H1 (cell line): ENCODE measurements at regions of chr12 and their contacts with region 1.

Region 1: GRCh38 chr12:124592472-124593160 is 25.2 kb upstream of the NCOR2 start:
- DNase-seq: no peak
- H3K4me3 ChIP-seq: no peak overlapping the region
- H3K27ac ChIP-seq: no peak overlapping the region
- H3K4me1 ChIP-seq: peaks cover 0 to 3% (median 0%) of the 10 kb centered on the region in 4 experiments; a peak in 2 of 7 replicates
- H3K27me3 ChIP-seq: 0 out of 7 replicates have a peak, but pooled peaks cover 0 to 2% (median 0%) of the 10 kb centered on the region in 4 experiments
- CTCF ChIP-seq: no peak
- EP300 ChIP-seq: no peak
- POLR2A ChIP-seq: no peak
- RAD21 ChIP-seq: no peak

Region 2: GRCh38 chr12:124559182-124560005 is 33.2 kb before region 1 on chr12:
- CTCF ChIA-PET with region 1: no interaction called
- POLR2A ChIA-PET with region 1: no interaction called
- DNase-seq: no peak
- H3K4me3 ChIP-seq: no peak overlapping the region
- H3K27ac ChIP-seq: no peak overlapping the region
- H3K4me1 ChIP-seq: peaks cover 21 to 57% (median 39%) of the 10 kb centered on the region in 4 experiments
- H3K27me3 ChIP-seq: no peaks in the 10 kb centered on the region
- CTCF ChIP-seq: no peak
- EP300 ChIP-seq: no peak
- POLR2A ChIP-seq: no peak
- RAD21 ChIP-seq: no peak

Region 3: GRCh38 chr12:124578445-124578844 is 14.2 kb before region 1 on chr12:
- CTCF ChIA-PET with region 1: interaction called, 14 read pairs
- POLR2A ChIA-PET with region 1: no interaction called
- DNase-seq: no peak
- H3K4me3 ChIP-seq: no peak overlapping the region
- H3K27ac ChIP-seq: no peak overlapping the region
- H3K4me1 ChIP-seq: peaks cover 0 to 11% (median 5%) of the 10 kb centered on the region in 4 experiments; a peak in 6 of 7 replicates
- H3K27me3 ChIP-seq: no peaks in the 10 kb centered on the region
- CTCF ChIP-seq: peak; percentile 41 to 45 (median 42)
- EP300 ChIP-seq: no peak
- POLR2A ChIP-seq: no peak
- RAD21 ChIP-seq: peak in 1 of 2 experiments; percentile 52; a peak in 2 of 4 replicates